Activated CD4-positive, alpha-beta memory T cell treated with anti-CD3 and anti-CD28 coated beads, Interleukin-2, amount 10 ng/mL, durations not matched to agents 7 days and 5 days (primary cell): ENCODE measurements at regions of chr1 and their contacts with region 1.

Region 1: DNA sequence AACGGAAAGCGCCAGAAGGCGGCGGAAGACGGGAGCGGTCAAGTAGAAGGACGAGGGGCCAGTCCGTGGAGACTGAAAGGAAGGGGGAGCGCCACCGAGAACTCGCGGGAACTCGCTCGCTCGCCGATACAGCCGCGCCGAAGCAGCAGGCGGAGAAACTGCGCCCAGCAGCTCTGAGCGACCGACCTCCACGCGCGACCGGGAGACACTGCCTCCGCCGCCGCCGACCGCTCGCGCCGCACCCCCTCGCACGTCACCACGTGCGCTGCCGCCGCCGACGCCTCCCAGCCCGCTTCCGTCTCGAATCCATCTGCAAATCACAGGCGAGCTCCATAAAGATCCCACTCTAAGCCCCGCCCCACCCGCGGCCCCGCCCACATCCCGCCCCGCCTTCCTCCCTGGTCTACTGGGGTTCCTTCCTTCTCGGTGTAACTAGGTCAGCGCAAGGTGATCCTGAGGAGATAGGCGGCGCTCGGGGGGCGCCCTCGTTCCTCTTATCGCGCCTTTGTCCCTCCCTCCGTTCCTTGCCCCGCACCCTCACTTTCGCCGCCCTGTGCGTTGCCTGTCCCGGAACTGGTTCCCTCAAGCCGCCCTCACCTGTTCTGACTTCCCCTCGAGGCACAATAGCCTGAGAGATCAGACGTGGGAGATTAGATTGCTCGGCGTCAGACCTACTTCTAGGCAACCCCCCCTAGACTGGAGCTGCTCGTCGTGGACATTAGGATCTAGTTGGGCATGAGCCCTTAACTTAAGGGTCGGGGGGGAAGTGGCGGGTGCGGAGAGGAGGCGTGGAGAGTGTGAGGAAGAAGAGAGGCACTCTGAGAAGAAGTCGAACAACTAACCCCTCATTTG is at the start of gene IVNS1ABP:
- DNase-seq: peak; percentile 96
- H3K4me3 Mint-ChIP-seq: peak within 1 kb of the TSS; percentile 95
- H3K27ac Mint-ChIP-seq: peak within 1 kb of the TSS; percentile 96
- H3K4me1 Mint-ChIP-seq: peaks cover 50% of the 10 kb centered on the region
- H3K27me3 Mint-ChIP-seq: no peaks in the 10 kb centered on the region
- total RNA-seq, gene IVNS1ABP: 136 to 144 TPM

Region 2: GRCh38 chr1:184974056-184974836 is 343.0 kb before region 1 on chr1 and contains the start of gene NIBAN1:
- CTCF ChIA-PET with region 1: no interaction called
- POLR2A ChIA-PET with region 1: interaction called, 16 read pairs
- DNase-seq: peak; percentile 76
- H3K4me3 Mint-ChIP-seq: peak within 1 kb of the TSS; percentile 90
- H3K27ac Mint-ChIP-seq: peak within 1 kb of the TSS; percentile 87
- H3K4me1 Mint-ChIP-seq: peaks cover 55% of the 10 kb centered on the region
- H3K27me3 Mint-ChIP-seq: peaks cover 3% of the 10 kb centered on the region
- total RNA-seq, gene NIBAN1: 68.8 to 71.7 TPM

Region 3: DNA sequence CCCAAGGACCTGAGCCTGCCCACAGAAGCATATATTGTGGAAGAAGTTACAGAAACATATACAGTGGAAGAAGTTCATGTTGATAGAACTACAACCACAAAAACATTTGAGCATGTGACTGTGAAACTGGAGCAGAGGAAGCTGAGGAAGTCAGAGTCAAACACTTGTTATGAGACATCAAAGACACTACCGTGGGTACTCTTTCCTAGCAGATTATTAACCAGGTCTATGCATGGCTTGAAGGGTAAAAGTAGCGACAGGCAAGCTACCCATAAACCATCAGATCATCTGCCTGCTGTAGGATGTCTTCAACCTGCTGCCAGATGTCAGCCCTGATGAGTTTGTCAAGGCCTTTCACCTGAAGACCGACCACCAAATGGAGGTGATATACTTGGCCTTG is 36.0 kb before region 1 on chr1:
- CTCF ChIA-PET with region 1: no interaction called
- POLR2A ChIA-PET with region 1: interaction called, 19 read pairs
- DNase-seq: no peak
- H3K4me3 Mint-ChIP-seq: no peak overlapping the region
- H3K27ac Mint-ChIP-seq: peak overlapping the region; percentile 70
- H3K4me1 Mint-ChIP-seq: peaks cover 20% of the 10 kb centered on the region
- H3K27me3 Mint-ChIP-seq: no peaks in the 10 kb centered on the region

Region 4: DNA sequence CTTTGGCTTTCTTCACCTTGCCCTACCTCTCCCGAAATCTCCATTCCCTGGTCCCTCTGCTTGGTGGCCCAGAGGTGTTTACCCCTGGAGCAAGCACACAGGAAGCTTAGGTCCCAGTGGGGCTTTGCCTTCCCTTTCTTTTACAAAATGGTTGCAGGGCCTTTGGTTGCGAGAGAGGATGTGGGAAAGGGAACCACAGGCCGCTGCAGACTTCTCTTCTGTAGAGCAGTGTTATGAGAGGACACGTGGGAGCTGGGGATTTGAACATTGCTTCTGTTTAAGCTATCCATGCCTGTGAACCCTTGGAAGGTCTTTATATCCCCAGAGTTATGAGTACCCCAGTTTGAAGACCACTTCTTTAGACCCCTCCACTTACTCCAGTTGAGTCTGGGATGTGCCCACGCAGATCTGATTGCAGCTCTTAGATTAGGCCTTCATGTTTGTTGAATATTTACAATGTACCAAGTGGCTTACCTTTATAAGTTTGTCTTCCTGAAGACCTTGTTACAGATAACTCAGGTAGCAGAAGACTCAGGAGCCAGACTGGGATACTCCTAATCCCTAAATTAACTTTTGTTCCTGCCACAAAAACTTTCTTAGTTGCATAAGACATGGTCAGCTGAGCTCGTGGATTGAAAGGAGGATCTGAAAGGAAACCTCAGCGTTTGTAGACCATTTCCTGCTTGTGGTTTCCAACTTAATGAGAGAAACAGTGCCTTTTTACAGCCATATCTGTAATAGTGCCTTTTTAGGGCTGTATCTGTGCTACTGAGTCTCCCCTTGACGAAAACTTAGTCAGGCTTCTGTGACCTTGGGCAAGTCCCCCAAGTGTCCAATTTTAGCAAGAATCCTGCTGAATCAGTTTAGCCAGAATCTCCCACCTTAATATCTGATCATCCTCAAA is 21.7 kb after region 1 on chr1:
- CTCF ChIA-PET with region 1: interaction called, 9 read pairs
- POLR2A ChIA-PET with region 1: interaction called, 47 read pairs
- DNase-seq: peak; percentile 80
- H3K4me3 Mint-ChIP-seq: peak overlapping the region; percentile 3
- H3K27ac Mint-ChIP-seq: peak overlapping the region; percentile 77
- H3K4me1 Mint-ChIP-seq: peaks cover 32% of the 10 kb centered on the region
- H3K27me3 Mint-ChIP-seq: no peaks in the 10 kb centered on the region

Region 5: GRCh38 chr1:185474440-185475149 is 157.3 kb after region 1 on chr1:
- CTCF ChIA-PET with region 1: no interaction called
- POLR2A ChIA-PET with region 1: no interaction called
- DNase-seq: no peak
- H3K4me3 Mint-ChIP-seq: no peak overlapping the region
- H3K27ac Mint-ChIP-seq: no peak overlapping the region
- H3K4me1 Mint-ChIP-seq: peaks cover 4% of the 10 kb centered on the region
- H3K27me3 Mint-ChIP-seq: peaks cover 3% of the 10 kb centered on the region

Region 6: DNA sequence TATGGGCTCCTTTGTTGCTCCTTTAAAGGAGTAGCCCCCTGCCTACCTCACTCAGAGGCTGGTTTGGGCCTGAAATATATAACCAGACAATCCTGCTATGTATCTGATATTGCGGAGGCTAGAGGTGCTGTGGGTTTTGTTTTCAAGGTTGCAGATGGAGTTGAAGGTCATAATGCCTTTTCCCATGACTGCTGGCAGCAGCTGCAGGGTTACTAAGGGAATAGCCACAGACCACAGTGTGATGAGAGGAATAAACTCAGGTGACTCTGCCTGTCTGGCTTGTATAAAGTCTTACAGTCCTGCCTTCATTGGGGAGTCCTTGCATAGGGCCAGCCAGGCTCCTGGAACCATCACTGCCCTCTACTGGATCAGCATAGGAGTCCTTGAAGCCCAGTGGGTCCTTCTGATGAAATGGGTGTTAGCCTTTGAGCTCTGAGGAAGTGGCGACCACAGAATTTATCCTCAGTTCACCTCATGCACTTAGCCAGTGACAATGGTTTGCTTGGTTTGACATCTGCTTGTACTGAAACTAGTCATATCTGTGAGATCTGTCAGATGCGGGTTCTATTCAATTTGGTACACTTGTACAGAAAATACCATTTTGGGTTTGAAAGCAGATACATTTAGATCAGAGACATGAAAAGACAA is 242.5 kb after region 1 on chr1:
- CTCF ChIA-PET with region 1: interaction called, 29 read pairs
- POLR2A ChIA-PET with region 1: interaction called, 62 read pairs
- DNase-seq: peak; percentile 80
- H3K4me3 Mint-ChIP-seq: no peak overlapping the region
- H3K27ac Mint-ChIP-seq: peak overlapping the region; percentile 86
- H3K4me1 Mint-ChIP-seq: peaks cover 48% of the 10 kb centered on the region
- H3K27me3 Mint-ChIP-seq: no peaks in the 10 kb centered on the region

Region 7: DNA sequence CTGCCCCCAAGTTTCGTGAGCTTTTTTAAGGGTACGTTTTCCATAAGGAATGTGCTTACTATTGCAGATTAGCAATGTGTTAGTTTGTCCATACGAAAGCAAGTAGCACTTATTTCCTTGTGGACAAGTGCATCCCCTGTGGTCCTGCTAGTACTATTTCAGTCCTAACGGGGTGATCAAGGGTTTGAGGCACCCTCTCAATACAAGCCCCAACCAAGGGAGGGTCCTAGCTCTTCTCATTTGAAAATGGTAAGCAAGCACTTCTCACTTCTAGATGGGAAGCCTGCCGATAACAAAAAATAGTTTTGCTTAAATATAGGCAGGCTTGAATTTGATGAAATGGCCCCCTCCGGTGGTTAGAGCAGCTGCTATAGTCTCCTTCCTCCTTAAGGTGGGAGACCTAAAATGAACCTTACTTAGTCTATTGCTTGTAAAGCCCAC is 352.9 kb after region 1 on chr1:
- CTCF ChIA-PET with region 1: interaction called, 10 read pairs
- POLR2A ChIA-PET with region 1: interaction called, 17 read pairs
- DNase-seq: peak; percentile 50
- H3K4me3 Mint-ChIP-seq: no peak overlapping the region
- H3K27ac Mint-ChIP-seq: no peak overlapping the region
- H3K4me1 Mint-ChIP-seq: peaks cover 21% of the 10 kb centered on the region
- H3K27me3 Mint-ChIP-seq: no peaks in the 10 kb centered on the region